ENCODE measurements at regions of chr13 and their contacts with region 1.

Region 1: GRCh38 chr13:99269627-99270241 is 11.6 kb upstream of the GPR18 start:
- DNase-seq: peak; percentile 48
- ATAC-seq: peak; percentile 76
- H3K4me3 ChIP-seq: no peak overlapping the region
- H3K27ac ChIP-seq: no peak overlapping the region
- H3K4me1 ChIP-seq: no peaks in the 10 kb centered on the region
- H3K27me3 ChIP-seq: no peaks in the 10 kb centered on the region
- CTCF ChIP-seq: peak; percentile 70

Region 2: DNA sequence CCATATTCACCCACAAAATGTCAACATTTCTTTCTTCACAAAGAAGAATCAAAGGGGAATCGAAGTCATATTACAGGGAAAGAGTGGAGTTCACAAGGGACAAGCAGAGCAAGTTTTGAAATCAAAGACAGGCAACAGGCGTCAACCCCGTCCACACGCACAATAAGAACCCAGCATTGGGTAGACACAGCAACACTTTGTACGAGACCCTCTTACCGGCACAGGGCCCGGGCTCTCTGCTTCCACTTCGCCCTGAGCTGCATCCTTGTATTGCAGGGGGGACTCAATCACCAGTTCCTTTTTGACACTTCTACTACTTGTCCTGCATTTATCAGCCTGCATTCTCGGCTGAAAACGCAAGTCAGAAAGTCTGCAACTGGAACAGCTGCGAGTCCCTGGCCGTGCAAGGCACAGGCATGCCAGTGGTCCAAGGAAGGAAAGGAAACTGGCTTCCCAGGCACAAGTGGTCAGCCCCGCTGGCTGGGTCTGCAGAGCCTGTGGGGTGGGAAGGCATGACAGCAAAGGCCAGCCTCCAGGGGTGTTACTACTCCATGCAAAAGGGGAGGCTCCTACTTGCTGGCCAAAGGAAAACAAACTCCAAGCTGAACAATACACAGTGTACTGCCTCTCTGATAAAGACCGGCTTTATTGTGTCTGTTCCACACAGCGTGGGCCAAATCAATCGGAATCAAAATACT is 292.0 kb before region 1 on chr13 and contains the start of gene DOCK9:
- CTCF ChIA-PET with region 1: no interaction called
- POLR2A ChIA-PET with region 1: no interaction called
- intact Hi-C with region 1: no loop called
- DNase-seq: peak; percentile 25
- ATAC-seq: peak; percentile 87
- H3K4me3 ChIP-seq: peak within 1 kb of the TSS; percentile 39
- H3K27ac ChIP-seq: peak within 1 kb of the TSS; percentile 71
- H3K4me1 ChIP-seq: peaks cover 34% of the 10 kb centered on the region
- H3K27me3 ChIP-seq: no peaks in the 10 kb centered on the region
- CTCF ChIP-seq: no peak
- total RNA-seq, gene DOCK9: 31.7 and 36.5 TPM in 2 replicates

Region 3: GRCh38 chr13:99176309-99177276 is 93.1 kb before region 1 on chr13:
- CTCF ChIA-PET with region 1: interaction called, 29 read pairs
- POLR2A ChIA-PET with region 1: no interaction called
- intact Hi-C with region 1: loop called (anchors 1 kb)
- DNase-seq: peak; percentile 81
- ATAC-seq: peak; percentile 99
- H3K4me3 ChIP-seq: peak overlapping the region; percentile 50; the same call in 1 of the 2 replicates
- H3K27ac ChIP-seq: no peak overlapping the region
- H3K4me1 ChIP-seq: no peaks in the 10 kb centered on the region; the same call in 1 of the 2 replicates
- H3K27me3 ChIP-seq: no peaks in the 10 kb centered on the region
- CTCF ChIP-seq: peak; percentile 86

Region 4: DNA sequence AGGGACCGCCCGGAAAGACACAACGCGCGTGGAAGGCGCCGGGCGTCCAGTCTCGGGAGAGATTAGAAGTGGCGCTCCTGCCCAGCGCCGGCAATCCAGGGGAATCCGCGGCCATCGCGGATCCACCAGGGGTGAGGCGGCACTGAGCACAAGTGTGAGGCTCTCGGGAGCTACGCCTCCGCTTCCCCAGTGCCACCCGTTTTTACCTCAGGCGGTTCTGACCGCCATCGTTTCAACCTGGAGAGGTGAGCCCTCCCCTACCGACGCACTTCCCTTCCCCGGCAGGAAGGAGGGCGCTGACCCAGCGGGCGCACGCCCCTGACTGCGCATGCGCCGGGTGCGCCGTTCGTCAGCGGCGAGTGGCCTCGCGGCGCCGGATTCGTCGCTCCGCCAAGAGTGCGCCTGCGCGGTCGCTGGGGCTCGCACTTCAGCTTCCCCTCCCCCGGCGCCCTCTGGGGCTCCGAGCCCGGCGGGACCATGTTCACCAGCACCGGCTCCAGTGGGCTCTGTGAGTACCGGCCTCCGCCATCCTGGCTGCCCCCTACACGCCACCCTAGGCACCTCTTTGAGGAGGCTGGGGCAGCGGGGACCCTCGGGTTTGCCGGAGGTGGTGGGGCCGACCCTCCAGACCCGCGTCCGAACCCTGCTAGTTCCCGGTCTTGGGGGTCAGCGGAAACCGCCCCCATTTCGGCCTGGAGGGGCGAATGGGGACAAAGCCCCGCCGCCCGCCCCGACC is 69.1 kb before region 1 on chr13 and contains the start of gene UBAC2:
- CTCF ChIA-PET with region 1: interaction called, 9 read pairs
- POLR2A ChIA-PET with region 1: interaction called, 4 read pairs
- intact Hi-C with region 1: loop called (anchors 1 kb)
- DNase-seq: peak; percentile 94
- ATAC-seq: peak; percentile 64
- H3K4me3 ChIP-seq: peak within 1 kb of the TSS; percentile 99
- H3K27ac ChIP-seq: peak within 1 kb of the TSS; percentile 93
- H3K4me1 ChIP-seq: peaks cover 46% of the 10 kb centered on the region
- H3K27me3 ChIP-seq: no peaks in the 10 kb centered on the region
- CTCF ChIP-seq: no peak
- total RNA-seq, gene UBAC2: 34.5 and 37.1 TPM in 2 replicates

Region 5: DNA sequence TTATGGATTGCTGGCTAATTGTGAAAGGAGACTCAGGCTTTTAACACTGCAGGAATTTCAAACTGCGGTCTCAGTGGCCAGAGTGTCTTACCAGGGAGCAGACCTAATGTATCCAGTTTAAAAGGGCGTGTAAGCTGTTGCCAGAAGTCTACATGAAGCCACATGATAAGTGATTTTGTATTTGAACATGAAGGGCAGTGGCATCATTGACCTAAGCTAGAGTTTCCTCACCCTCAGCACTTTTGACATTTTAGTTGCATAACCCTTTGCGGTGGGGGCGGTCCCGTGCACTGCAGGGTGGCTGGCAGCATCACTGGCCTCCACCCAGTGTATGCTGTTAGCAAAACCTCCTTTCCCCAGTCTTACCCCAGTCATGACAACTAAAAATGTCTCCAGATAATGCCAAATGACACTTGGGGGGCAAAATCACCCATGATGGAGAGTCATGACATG is 12.1 kb after region 1 on chr13:
- CTCF ChIA-PET with region 1: no interaction called
- POLR2A ChIA-PET with region 1: no interaction called
- intact Hi-C with region 1: no loop called
- DNase-seq: no peak
- ATAC-seq: no peak
- H3K4me3 ChIP-seq: no peak overlapping the region
- H3K27ac ChIP-seq: no peak overlapping the region
- H3K4me1 ChIP-seq: no peaks in the 10 kb centered on the region
- H3K27me3 ChIP-seq: no peaks in the 10 kb centered on the region
- CTCF ChIP-seq: no peak

Region 6: GRCh38 chr13:99331881-99332293 is 62.2 kb after region 1 on chr13:
- CTCF ChIA-PET with region 1: no interaction called
- POLR2A ChIA-PET with region 1: no interaction called
- intact Hi-C with region 1: no loop called
- DNase-seq: peak; percentile 74
- ATAC-seq: peak; percentile 92
- H3K4me3 ChIP-seq: no peak overlapping the region
- H3K27ac ChIP-seq: peak overlapping the region; percentile 71
- H3K4me1 ChIP-seq: peaks cover 20% of the 10 kb centered on the region
- H3K27me3 ChIP-seq: no peaks in the 10 kb centered on the region
- CTCF ChIP-seq: no peak

Region 7: GRCh38 chr13:99356158-99357091 is 86.7 kb after region 1 on chr13:
- CTCF ChIA-PET with region 1: no interaction called
- POLR2A ChIA-PET with region 1: no interaction called
- intact Hi-C with region 1: no loop called
- DNase-seq: no peak
- ATAC-seq: no peak; the same call in 1 of the 2 replicates
- H3K4me3 ChIP-seq: no peak overlapping the region
- H3K27ac ChIP-seq: peak overlapping the region; percentile 51
- H3K4me1 ChIP-seq: peaks cover 22% of the 10 kb centered on the region
- H3K27me3 ChIP-seq: no peaks in the 10 kb centered on the region
- CTCF ChIP-seq: no peak

Region 8: GRCh38 chr13:99436686-99437416 is 167.1 kb after region 1 on chr13:
- CTCF ChIA-PET with region 1: interaction called, 8 read pairs
- POLR2A ChIA-PET with region 1: no interaction called
- intact Hi-C with region 1: loop called (anchors 1 kb)
- DNase-seq: peak; percentile 73
- ATAC-seq: peak; percentile 54
- H3K4me3 ChIP-seq: peak overlapping the region; percentile 49; the same call in 1 of the 2 replicates
- H3K27ac ChIP-seq: no peak overlapping the region
- H3K4me1 ChIP-seq: peaks cover 22% of the 10 kb centered on the region
- H3K27me3 ChIP-seq: no peaks in the 10 kb centered on the region
- CTCF ChIP-seq: peak; percentile 100

Region 9: DNA sequence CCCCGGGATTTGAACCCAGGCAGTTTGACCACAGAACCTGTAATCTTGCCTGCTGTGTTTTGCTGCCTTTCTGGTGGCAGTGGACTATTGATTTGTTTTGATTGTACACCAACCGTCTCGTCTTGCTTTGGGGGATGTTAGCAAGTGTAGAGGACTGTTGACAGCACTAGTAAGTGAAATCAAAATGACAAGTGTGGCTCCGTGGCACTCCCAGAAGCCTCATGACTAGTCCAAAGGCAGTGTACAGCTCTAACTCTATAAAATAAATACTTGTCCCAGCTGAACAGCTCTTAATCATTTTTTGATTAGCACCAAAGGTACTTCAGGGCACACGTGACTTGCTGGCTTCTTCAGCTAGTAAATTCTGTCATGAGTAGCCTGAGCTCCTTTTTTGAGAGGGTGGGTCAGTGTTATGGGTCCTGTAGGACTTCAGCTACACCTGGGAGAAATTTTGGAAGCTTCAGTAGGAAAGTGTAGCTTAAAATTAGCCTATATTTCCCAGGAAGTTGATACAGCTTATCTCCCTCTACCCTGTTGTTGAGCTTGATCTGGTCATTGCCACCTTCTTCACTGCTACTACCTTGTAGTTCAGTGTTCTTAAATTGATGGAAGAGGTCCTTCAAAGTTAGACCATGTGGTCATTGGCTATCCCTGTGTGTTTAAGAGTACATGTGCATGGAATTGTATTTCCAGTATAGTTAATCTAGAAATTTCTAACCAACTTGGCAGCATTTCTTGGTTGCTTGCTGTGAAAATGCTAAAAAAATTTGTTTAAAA is 246.6 kb after region 1 on chr13:
- CTCF ChIA-PET with region 1: no interaction called
- POLR2A ChIA-PET with region 1: no interaction called
- intact Hi-C with region 1: loop called (anchors 10 kb)
- DNase-seq: no peak
- ATAC-seq: no peak
- H3K4me3 ChIP-seq: no peak overlapping the region
- H3K27ac ChIP-seq: peak overlapping the region; percentile 34
- H3K4me1 ChIP-seq: peaks cover 10% of the 10 kb centered on the region; the same call in 1 of the 2 replicates
- H3K27me3 ChIP-seq: no peaks in the 10 kb centered on the region
- CTCF ChIP-seq: no peak